Dorsolateral prefrontal cortex (tissue), 120 donors: ENCODE measurements at regions of chr21 and their contacts with region 1.

Region 1: DNA sequence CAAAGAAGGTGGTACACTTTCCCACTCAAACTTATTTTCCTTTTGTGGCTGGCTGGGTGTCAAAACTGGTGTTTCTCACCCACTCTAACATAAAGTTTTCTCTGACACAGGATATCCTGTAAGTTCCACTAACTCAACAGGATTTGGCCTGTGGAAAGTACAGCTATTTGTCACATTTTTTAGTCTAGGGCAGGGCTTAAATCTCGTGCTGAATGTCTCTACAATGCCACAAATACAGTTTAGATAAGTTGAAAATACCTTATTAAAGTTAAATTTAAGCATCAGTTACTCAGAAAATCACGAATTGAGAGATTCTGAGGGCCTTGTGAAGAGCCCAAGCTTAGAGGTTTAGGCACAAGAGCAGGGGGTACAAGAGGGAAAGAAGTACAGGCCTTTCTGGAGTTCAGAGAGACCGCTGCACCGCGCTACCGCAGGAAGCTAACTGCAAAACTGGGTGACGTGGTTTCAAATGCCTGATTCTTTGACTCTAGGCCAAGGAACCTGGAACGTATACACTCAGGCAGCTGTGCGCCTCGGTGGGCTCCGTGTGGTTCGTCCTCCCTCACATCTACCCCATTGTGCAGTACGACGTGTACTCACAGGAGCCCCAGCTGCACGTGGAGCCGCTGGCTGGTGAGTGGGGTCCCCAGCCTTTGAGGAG is 23.4 kb upstream of the PWP2 start:
- DNase-seq: peak in 3 of 10 donors; percentile 9 to 45 (median 36)
- H3K4me3 ChIP-seq: peak overlapping the region in 1 of 59 donors; percentile 20
- H3K27ac ChIP-seq: peak overlapping the region; percentile 85 to 100 (median 98)
- H3K27me3 ChIP-seq: no peaks in the 10 kb centered on the region
- CTCF ChIP-seq: no peak

Region 2: DNA sequence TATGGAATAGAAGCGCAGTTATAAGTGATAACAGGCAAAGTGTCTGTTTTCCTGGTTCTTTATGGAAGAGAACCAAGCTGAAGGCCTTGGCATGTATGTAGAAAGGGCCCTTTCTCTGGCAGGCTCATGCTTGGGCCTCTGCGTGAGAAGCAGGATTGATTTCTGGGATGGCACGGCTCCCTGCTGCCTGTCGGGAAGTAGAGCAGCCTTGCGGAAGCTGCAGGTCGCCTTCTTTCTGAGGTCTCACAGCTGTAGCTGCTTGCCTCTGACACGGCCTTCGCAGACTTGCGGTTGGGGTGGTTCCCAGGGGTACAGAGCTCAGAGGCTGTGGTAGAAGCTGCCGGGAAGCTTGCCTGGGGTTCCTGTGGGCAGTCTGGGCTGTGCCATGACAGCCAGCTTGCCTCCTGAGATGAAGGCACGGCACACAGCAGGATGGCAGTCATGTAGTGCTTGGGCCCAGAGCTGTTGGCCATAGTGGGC is 32.3 kb before region 1 on chr21:
- intact Hi-C with region 1: loop called (anchors 2 kb)
- DNase-seq: peak in 5 of 10 donors; percentile 41 to 67 (median 56)
- H3K4me3 ChIP-seq: peak overlapping the region in 7 of 59 donors; percentile 2 to 20 (median 7)
- H3K27ac ChIP-seq: peak overlapping the region; percentile 77 to 99 (median 95)
- H3K27me3 ChIP-seq: no peaks in the 10 kb centered on the region
- CTCF ChIP-seq: peak in 1 of 56 donors; percentile 10